RWPE1 (cell line): ENCODE measurements at regions of chr10 and their contacts with region 1.

Region 1: DNA sequence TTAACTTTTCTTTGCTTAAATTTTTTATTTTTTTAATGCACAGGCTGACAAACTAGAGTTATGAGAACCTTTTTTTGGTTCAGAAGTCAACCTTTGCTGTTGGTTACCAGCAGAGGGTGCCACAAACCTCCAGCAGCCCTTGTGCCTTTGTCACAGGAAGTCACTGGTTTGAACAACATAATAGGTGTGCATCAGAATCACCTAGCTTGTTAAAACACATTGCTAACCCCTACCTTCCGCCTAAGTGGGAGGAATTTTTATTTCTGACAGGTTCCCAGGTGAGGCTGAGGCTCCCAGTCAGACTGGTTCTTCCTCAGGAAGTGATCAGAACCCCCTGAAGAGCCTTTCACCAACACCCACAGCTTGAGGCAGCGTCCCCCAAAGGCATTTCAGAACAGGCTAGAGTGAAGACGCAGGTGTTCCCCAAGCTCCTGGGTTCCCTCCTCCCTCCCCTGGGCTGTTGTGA is 22.6 kb upstream of the VDAC2 start:
- DNase-seq: peak; percentile 79
- H3K27ac ChIP-seq: peak overlapping the region; percentile 73
- CTCF ChIP-seq: peak; percentile 83

Region 2: GRCh38 chr10:75223507-75223906 is 35.5 kb after region 1 on chr10:
- CTCF ChIA-PET with region 1: interaction called, 12 read pairs
- POLR2A ChIA-PET with region 1: no interaction called
- DNase-seq: no peak
- H3K27ac ChIP-seq: peak overlapping the region; percentile 23; the same call in 1 of the 2 replicates
- CTCF ChIP-seq: no peak

Region 3: DNA sequence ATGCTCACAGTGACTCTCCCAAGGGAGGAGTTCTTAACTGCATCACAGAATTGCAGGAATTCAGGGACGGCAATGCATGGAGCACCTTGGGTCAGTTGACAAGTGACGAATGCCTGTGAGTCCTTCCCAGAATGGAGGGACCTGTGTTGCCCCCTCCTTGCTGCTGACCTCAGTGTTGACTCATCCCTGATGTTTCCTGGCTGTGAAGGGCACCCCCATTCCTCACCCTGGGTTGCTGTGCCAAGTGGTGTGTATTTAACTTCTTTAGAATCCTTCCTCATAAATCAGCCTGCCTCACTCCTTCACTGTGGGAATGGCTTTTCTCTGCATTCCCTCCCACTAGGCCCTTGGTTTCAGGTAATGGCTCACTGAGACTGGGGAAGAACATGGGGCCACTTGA is 342.3 kb after region 1 on chr10:
- CTCF ChIA-PET with region 1: no interaction called
- POLR2A ChIA-PET with region 1: no interaction called
- DNase-seq: no peak
- H3K27ac ChIP-seq: no peak overlapping the region
- CTCF ChIP-seq: no peak